Natural killer cell (primary cell): ENCODE measurements at regions of chr9 and their contacts with region 1.

Region 1: DNA sequence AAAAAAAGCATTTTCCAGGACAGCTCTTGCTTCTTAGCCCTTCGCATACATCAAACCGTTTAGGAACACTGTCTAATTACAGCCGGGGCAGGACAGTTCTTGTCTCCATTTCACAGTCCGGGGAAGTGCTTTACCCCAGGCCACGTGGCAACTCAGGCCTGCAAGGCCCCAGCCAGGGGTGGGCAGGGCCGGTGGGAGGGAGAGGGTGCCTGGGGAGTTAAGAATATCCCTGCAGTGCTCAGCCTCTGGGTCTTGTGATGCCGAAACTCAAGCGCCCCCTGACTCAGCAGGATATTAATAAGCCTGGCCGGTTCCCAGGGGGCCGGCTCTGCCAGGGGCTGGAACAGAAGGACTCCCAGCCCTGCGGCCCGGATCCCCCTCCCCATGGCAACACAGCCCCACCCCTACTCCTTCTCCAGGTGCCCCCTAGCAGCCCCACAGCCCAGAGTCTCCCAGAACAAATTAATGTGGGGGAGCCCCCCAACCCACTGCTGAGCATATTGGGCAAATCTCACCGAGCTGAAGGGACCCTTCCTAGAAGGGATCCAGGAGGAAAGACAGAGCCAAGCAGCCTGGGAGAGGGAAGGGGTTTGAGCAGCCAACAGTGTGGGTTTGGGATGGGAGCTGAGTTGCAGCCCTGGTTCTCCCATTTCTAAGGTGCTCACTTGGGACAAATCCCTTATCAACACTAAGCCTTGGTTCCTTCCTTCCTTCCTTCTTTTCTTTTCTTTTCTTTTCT is 45.3 kb downstream of the PLPP7 start:
- DNase-seq: no peak
- ATAC-seq: no peak
- H3K4me3 ChIP-seq: no peak overlapping the region
- H3K4me3 Mint-ChIP-seq: no peak overlapping the region
- H3K27ac ChIP-seq: no peak overlapping the region
- H3K27ac Mint-ChIP-seq: no peak overlapping the region
- H3K4me1 ChIP-seq: peaks cover 3% of the 10 kb centered on the region
- H3K4me1 Mint-ChIP-seq: peaks cover 5% of the 10 kb centered on the region in 2 donors
- H3K27me3 ChIP-seq: no peaks in the 10 kb centered on the region
- H3K27me3 Mint-ChIP-seq: no peaks in the 10 kb centered on the region
- CTCF ChIP-seq: no peak

Region 2: DNA sequence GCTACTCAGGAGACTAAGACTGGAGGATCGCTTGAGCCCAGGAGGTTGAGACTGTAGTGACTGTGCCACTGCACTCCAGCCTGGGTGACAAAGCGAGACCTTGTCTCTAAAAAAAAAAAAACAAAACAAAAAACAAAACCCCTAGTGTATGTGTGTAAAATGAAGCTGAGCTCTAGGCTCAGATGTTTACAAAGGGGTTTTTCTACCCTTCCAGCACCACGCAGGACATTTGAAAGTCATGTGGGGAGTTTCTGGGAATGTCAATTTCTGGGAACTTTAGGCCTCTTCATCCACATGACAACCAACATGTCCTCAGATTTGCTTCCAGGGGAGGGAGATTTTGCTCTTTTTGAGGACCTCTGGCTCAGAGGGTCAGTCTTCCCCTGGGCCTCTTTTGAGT is 280.9 kb before region 1 on chr9:
- intact Hi-C with region 1: loop called (anchors 1 kb)
- DNase-seq: no peak
- ATAC-seq: no peak
- H3K4me3 ChIP-seq: no peak overlapping the region
- H3K4me3 Mint-ChIP-seq: no peak overlapping the region
- H3K27ac ChIP-seq: no peak overlapping the region
- H3K27ac Mint-ChIP-seq: no peak overlapping the region
- H3K4me1 ChIP-seq: no peaks in the 10 kb centered on the region
- H3K4me1 Mint-ChIP-seq: no peaks in the 10 kb centered on the region
- H3K27me3 ChIP-seq: no peaks in the 10 kb centered on the region
- H3K27me3 Mint-ChIP-seq: peaks cover 0 to 3% of the 10 kb centered on the region in 2 donors
- CTCF ChIP-seq: no peak

Region 3: GRCh38 chr9:131178382-131178781 is 156.4 kb before region 1 on chr9:
- intact Hi-C with region 1: loop called (anchors 1 kb)
- DNase-seq: peak; percentile 68 to 85
- ATAC-seq: peak; percentile 95 to 100 (median 99)
- H3K4me3 ChIP-seq: no peak overlapping the region
- H3K4me3 Mint-ChIP-seq: no peak overlapping the region
- H3K27ac ChIP-seq: no peak overlapping the region
- H3K27ac Mint-ChIP-seq: no peak overlapping the region
- H3K4me1 ChIP-seq: peaks cover 5% of the 10 kb centered on the region
- H3K4me1 Mint-ChIP-seq: peaks cover 9 to 24% of the 10 kb centered on the region in 2 donors
- H3K27me3 ChIP-seq: no peaks in the 10 kb centered on the region
- H3K27me3 Mint-ChIP-seq: no peaks in the 10 kb centered on the region
- CTCF ChIP-seq: peak; percentile 99